Gastrocnemius medialis (tissue), 4 donors: ENCODE measurements at regions of chr1 and their contacts with region 1.

Region 1: DNA sequence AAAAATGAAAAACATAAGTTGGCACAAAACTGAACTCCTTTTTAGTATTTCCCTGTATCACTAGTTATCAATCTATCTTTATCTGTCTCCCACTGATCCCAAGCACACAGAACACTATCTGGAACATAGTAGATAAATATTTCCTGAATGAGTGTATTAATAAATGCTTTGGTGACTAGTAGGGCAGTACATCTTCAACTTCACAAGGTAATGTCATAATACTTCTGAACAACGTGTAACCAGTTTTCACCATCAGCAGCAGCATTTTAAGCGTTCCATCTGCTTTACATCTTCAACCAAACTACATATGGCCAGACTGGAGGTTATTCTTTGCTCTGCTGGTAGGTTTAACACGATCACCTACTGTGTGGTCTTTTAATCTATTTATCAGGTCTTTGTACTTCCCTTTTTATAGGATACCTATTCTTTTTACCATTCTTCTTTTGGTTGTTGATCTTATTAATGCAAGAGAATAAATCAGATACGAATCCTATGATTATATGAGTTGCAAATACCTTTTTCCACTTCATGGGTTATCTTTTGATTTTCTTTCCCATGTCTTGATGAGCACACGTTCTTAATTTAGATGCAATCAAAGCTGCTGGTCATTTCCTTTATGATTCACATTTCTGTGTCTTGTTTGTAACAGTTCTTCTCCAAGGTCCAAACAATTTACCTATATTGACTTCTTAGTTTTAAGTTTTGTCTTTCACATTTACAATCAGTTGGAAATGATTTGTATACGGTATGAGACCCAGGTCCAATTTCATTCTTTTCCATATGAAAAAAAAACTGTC is 16.3 kb downstream of the GPBP1L1 start:
- DNase-seq: no peak
- ATAC-seq: peak; percentile 35 to 50
- H3K4me3 ChIP-seq: no peak overlapping the region
- H3K27ac ChIP-seq: peak overlapping the region; percentile 52 to 75 (median 69)
- H3K4me1 ChIP-seq: peaks cover 82 to 90% of the 10 kb centered on the region in 2 donors
- H3K27me3 ChIP-seq: no peaks in the 10 kb centered on the region
- CTCF ChIP-seq: no peak
- POLR2A ChIP-seq: no peak

Region 2: DNA sequence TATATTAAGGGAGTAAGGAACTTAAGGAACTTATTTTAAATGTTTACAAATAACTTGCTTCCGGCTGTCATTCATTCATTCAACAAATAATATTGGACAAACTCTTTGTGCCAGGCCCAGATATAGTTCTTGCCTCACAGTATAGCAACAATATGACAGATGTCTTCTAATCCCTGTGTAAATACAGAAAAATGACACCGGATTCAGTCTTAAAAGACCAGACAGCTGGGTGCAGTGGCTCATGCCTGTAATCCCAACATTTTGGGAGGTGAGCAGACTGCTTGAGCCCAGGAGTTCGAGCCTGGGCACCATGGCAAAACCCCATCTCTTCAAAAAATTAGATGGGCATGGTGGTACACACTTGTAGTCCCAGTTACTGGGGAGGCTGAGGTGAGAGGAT is 707.3 kb before region 1 on chr1:
- in situ Hi-C with region 1: no loop called
- intact Hi-C with region 1: no loop called
- DNase-seq: no peak
- ATAC-seq: no peak
- H3K4me3 ChIP-seq: no peak overlapping the region
- H3K27ac ChIP-seq: no peak overlapping the region
- H3K4me1 ChIP-seq: peaks cover 0 to 2% of the 10 kb centered on the region in 2 donors
- H3K27me3 ChIP-seq: no peaks in the 10 kb centered on the region
- CTCF ChIP-seq: no peak
- POLR2A ChIP-seq: no peak

Region 3: GRCh38 chr1:45155423-45155822 is 514.6 kb before region 1 on chr1:
- in situ Hi-C with region 1: no loop called
- intact Hi-C with region 1: no loop called
- DNase-seq: no peak
- ATAC-seq: no peak
- H3K4me3 ChIP-seq: no peak overlapping the region
- H3K27ac ChIP-seq: no peak overlapping the region
- H3K4me1 ChIP-seq: no peaks in the 10 kb centered on the region
- H3K27me3 ChIP-seq: no peaks in the 10 kb centered on the region
- CTCF ChIP-seq: no peak
- POLR2A ChIP-seq: no peak

Region 4: GRCh38 chr1:45339789-45340570 is 330.1 kb before region 1 on chr1 and contains the starts of genes MUTYH and TOE1:
- in situ Hi-C with region 1: no loop called
- intact Hi-C with region 1: no loop called
- DNase-seq: peak; percentile 81 to 88
- ATAC-seq: peak; percentile 92 to 93
- H3K4me3 ChIP-seq: peak within 1 kb of the TSS; percentile 88 to 98 (median 96)
- H3K27ac ChIP-seq: peak within 1 kb of the TSS; percentile 92 to 100 (median 100)
- H3K4me1 ChIP-seq: peaks cover 17 to 18% of the 10 kb centered on the region in 2 donors
- H3K27me3 ChIP-seq: no peaks in the 10 kb centered on the region
- CTCF ChIP-seq: peak in 2 of 5 experiments; percentile 26 to 34
- POLR2A ChIP-seq: peak; percentile 56
- total RNA-seq, gene MUTYH: 10.1 to 20.6 (median 11.0) TPM
- total RNA-seq, gene TOE1: 2.9 to 9.4 (median 5.3) TPM

Region 5: DNA sequence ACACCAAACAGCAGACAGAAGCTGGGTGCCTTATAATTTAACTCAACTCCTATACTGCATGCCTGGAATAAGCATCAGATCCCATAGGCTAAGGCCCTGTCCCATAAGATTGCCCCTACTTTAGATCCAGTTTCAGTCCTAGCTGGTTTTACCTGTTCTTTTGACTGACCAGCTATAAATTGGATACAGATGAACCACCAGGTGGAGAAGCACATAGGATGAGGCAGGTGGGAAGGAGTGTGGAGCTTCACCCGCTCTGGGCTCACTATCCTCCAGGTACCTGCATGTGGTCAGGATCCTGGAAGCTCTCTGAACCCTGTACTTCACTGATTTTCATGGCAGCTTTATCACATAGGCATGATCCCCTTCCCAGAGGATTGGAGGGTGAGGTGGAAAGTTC is 184.7 kb after region 1 on chr1:
- in situ Hi-C with region 1: loop called in 1 of 4 experiments (anchors 10 kb)
- intact Hi-C with region 1: no loop called
- DNase-seq: no peak
- ATAC-seq: no peak
- H3K4me3 ChIP-seq: no peak overlapping the region
- H3K27ac ChIP-seq: no peak overlapping the region
- H3K4me1 ChIP-seq: no peaks in the 10 kb centered on the region
- H3K27me3 ChIP-seq: no peaks in the 10 kb centered on the region
- CTCF ChIP-seq: no peak
- POLR2A ChIP-seq: no peak